Activated CD4-positive, alpha-beta T cell treated with anti-CD3 and anti-CD28 coated beads for 36 hours (primary cell): ENCODE measurements at regions of chr9 and their contacts with region 1.

Region 1: GRCh38 chr9:14585730-14586473 is 107.3 kb downstream of the ZDHHC21 start:
- DNase-seq: peak; percentile 51
- ATAC-seq: peak; percentile 95
- H3K4me3 Mint-ChIP-seq: no peak overlapping the region
- H3K27ac Mint-ChIP-seq: no peak overlapping the region
- H3K4me1 Mint-ChIP-seq: peaks cover 10% of the 10 kb centered on the region
- H3K27me3 Mint-ChIP-seq: peaks cover 6% of the 10 kb centered on the region

Region 2: GRCh38 chr9:14515571-14516198 is 70.2 kb before region 1 on chr9:
- CTCF ChIA-PET with region 1: no interaction called
- POLR2A ChIA-PET with region 1: no interaction called
- intact Hi-C with region 1: no loop called
- DNase-seq: no peak
- ATAC-seq: no peak
- H3K4me3 Mint-ChIP-seq: no peak overlapping the region
- H3K27ac Mint-ChIP-seq: no peak overlapping the region
- H3K4me1 Mint-ChIP-seq: no peaks in the 10 kb centered on the region
- H3K27me3 Mint-ChIP-seq: peaks cover 2% of the 10 kb centered on the region

Region 3: GRCh38 chr9:14535161-14535955 is 50.5 kb before region 1 on chr9:
- CTCF ChIA-PET with region 1: no interaction called
- POLR2A ChIA-PET with region 1: no interaction called
- intact Hi-C with region 1: loop called in 1 of 2 experiments (anchors 5 kb)
- DNase-seq: no peak
- ATAC-seq: no peak
- H3K4me3 Mint-ChIP-seq: no peak overlapping the region
- H3K27ac Mint-ChIP-seq: no peak overlapping the region
- H3K4me1 Mint-ChIP-seq: no peaks in the 10 kb centered on the region
- H3K27me3 Mint-ChIP-seq: peaks cover 13% of the 10 kb centered on the region

Region 4: DNA sequence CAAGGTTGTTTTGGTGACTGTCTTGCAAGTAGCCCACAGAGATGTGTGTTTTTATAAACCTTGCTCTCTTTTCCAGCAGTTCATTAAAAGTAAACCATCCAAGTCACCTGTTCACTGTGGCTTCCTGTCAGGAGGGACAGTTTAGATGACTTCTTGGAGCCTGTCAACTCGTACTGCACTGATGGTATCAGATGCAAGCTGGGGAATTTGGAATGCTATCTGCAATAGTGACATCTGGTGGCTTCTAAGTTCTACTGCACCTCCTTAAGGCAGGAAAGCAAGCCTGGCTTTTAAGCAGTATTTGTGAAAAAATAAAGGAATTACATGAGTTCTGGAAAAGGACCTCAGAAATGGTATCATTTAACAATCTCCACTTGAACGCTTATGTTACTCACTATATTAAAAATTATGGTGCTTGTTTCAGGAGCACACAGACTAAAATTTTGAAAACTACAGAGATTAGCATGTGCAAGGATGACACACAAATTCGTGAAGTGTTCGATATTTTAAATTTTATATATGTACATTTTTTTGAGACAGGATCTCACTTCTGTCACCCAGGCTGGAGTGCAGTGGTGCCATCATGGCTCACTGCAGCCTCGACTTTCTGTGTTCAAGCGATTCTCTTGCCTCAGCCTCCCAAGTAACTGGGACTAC is 557.1 kb after region 1 on chr9:
- CTCF ChIA-PET with region 1: no interaction called
- POLR2A ChIA-PET with region 1: no interaction called
- intact Hi-C with region 1: no loop called
- DNase-seq: no peak
- ATAC-seq: peak; percentile 84
- H3K4me3 Mint-ChIP-seq: no peak overlapping the region
- H3K27ac Mint-ChIP-seq: no peak overlapping the region
- H3K4me1 Mint-ChIP-seq: peaks cover 3% of the 10 kb centered on the region
- H3K27me3 Mint-ChIP-seq: peaks cover 7% of the 10 kb centered on the region